ENCODE measurements at regions of chr11 and their contacts with region 1.

Region 1: DNA sequence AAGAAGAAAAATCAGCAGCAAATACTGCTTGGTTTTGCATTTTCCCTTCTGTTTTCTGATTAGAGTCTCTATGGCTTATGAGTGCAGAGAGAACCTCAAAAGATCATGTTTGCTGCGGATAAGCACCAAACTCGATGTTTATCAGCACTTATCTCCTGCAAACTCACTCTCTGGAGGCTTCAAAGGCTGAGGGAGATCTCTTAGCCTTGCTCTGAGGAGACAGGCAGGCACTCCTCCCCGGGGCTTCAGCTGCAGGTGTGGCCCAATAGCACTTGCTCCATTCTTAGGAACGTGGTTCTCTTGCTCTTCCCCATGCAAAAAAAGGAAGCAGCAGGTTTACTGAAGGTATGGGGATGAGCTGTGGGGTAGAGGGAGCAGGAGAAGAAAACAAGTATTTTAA is 45.1 kb downstream of the FLI1 start:
- DNase-seq: no peak
- H3K4me3 Mint-ChIP-seq: peak overlapping the region; percentile 42
- H3K27ac Mint-ChIP-seq: peak overlapping the region; percentile 3
- H3K4me1 Mint-ChIP-seq: peaks cover 75% of the 10 kb centered on the region
- H3K27me3 Mint-ChIP-seq: no peaks in the 10 kb centered on the region

Region 2: DNA sequence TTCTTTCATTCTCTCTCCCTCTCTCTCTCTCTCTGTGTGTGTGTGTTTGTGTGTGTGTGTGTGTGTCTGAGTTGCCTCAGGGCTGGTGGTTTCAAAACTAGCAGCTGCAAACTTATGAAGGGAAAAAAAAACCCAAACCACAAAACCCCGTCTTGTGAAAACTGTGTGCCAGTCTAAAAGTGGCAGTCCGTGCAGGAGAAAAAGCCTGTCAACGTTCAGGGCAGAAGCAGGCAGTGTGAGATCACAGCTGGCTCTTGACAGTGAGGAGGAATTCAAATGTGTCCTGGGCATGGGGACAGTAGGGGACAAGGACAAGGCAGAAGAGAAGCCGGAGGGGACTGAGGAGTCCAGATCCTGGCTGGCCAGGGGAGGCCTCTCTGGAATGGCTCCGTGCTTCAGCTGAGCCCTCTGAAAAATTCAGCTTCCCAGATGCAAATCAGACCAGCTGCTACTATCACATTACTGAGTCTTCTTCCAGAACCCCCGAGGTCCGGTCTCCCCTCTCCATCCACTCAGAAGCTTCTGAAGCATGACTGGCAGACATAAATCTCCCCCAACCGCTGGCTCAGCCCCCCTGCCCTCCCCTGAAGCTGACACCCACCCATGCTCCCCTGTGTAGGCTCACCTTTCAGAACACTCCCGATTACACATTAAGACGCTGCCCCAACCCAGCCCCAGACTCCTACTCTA is 13.2 kb before region 1 on chr11:
- CTCF ChIA-PET with region 1: interaction called, 5 read pairs
- intact Hi-C with region 1: loop called (anchors 1 kb)
- DNase-seq: peak; percentile 79
- H3K4me3 Mint-ChIP-seq: peak overlapping the region; percentile 61
- H3K27ac Mint-ChIP-seq: peak overlapping the region; percentile 84
- H3K4me1 Mint-ChIP-seq: peaks cover 98% of the 10 kb centered on the region
- H3K27me3 Mint-ChIP-seq: no peaks in the 10 kb centered on the region

Measured in activated naive CD4-positive, alpha-beta T cell treated with anti-CD3 and anti-CD28 coated beads for 36 hours (primary cell).